ENCODE measurements at regions of chr5 and their contacts with region 1.

Region 1: GRCh38 chr5:39948867-39949468 is 524.2 kb upstream of the DAB2 start:
- DNase-seq: peak; percentile 44
- H3K4me3 ChIP-seq: no peak overlapping the region
- H3K27ac ChIP-seq: no peak overlapping the region
- H3K27me3 ChIP-seq: no peaks in the 10 kb centered on the region
- CTCF ChIP-seq: peak; percentile 72

Region 2: GRCh38 chr5:39578887-39579497 is 370.0 kb before region 1 on chr5:
- CTCF ChIA-PET with region 1: interaction called, 11 read pairs
- POLR2A ChIA-PET with region 1: no interaction called
- DNase-seq: no peak
- H3K4me3 ChIP-seq: no peak overlapping the region
- H3K27ac ChIP-seq: no peak overlapping the region
- H3K27me3 ChIP-seq: no peaks in the 10 kb centered on the region
- CTCF ChIP-seq: peak; percentile 50

Region 3: GRCh38 chr5:39714036-39714698 is 234.8 kb before region 1 on chr5:
- CTCF ChIA-PET with region 1: interaction called, 22 read pairs
- POLR2A ChIA-PET with region 1: no interaction called
- DNase-seq: peak; percentile 39
- H3K4me3 ChIP-seq: no peak overlapping the region
- H3K27ac ChIP-seq: no peak overlapping the region
- H3K27me3 ChIP-seq: no peaks in the 10 kb centered on the region
- CTCF ChIP-seq: peak; percentile 86

Region 4: DNA sequence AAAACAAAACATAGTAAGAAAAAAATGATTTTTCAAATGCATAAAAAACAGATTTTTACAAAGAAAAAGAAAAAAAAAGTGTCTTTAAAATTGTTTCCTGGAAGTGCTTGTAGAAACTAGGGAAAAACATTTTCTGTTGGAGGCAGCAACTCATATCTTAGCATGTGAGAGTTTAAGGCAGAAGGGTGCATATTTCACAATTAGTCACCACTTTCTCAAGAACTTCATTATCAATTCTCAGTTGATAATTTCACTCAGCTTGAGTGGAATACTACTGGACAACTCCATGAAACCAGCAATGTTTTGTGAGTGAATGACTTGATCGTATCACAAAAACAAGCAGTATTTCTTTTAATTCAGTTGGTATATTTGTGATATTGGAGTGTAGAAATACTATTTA is 15.9 kb before region 1 on chr5:
- CTCF ChIA-PET with region 1: interaction called, 10 read pairs
- POLR2A ChIA-PET with region 1: no interaction called
- DNase-seq: no peak
- H3K4me3 ChIP-seq: no peak overlapping the region
- H3K27ac ChIP-seq: no peak overlapping the region
- H3K27me3 ChIP-seq: no peaks in the 10 kb centered on the region
- CTCF ChIP-seq: no peak

Region 5: GRCh38 chr5:40681363-40682153 is 732.6 kb after region 1 on chr5:
- CTCF ChIA-PET with region 1: interaction called, 38 read pairs
- POLR2A ChIA-PET with region 1: interaction called, 3 read pairs
- DNase-seq: no peak
- H3K4me3 ChIP-seq: peak overlapping the region; percentile 77
- H3K27ac ChIP-seq: no peak overlapping the region
- H3K27me3 ChIP-seq: no peaks in the 10 kb centered on the region
- CTCF ChIP-seq: no peak

Region 6: DNA sequence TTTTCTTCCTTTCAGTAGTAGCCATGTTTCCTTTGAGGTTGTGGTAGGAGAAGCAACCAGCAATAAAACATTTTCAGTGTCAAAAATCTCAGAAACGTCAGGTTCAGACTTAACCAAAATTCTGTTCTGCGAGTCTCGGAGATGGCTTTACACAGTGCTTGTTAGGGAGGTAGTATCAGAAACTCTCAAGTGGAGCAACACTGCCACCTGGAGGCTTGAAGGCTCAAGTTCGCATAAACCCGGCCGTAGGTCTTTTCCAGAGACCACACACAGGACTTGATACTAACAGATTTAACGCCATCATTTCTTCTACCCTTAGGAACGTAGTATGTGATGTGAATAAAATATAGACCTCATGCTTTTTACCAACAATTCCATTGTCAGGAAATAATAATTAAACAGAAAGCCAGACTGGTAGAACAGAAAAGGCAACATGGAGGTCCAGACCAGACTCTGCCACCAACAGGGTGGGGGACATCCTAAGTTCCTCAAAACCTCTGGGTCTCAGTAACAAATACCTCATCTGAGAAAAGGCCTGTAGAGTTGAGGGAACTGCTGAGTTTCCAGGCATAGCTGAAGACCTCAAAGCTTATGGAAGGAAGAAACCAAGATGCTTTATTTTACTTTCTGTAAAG is 739.3 kb after region 1 on chr5:
- CTCF ChIA-PET with region 1: interaction called, 38 read pairs
- POLR2A ChIA-PET with region 1: no interaction called
- DNase-seq: peak; percentile 72
- H3K4me3 ChIP-seq: no peak overlapping the region
- H3K27ac ChIP-seq: no peak overlapping the region
- H3K27me3 ChIP-seq: no peaks in the 10 kb centered on the region
- CTCF ChIP-seq: peak; percentile 87

Region 7: GRCh38 chr5:40736103-40736875 is 787.3 kb after region 1 on chr5:
- CTCF ChIA-PET with region 1: interaction called, 22 read pairs
- POLR2A ChIA-PET with region 1: no interaction called
- DNase-seq: no peak
- H3K4me3 ChIP-seq: no peak overlapping the region
- H3K27ac ChIP-seq: no peak overlapping the region
- H3K27me3 ChIP-seq: no peaks in the 10 kb centered on the region
- CTCF ChIP-seq: peak; percentile 80